Heart left ventricle (tissue), 16 donors: ENCODE measurements at regions of chr7 and their contacts with region 1.

Region 1: GRCh38 chr7:81549484-81550016 is 220.3 kb downstream of the HGF start:
- DNase-seq: no peak
- ATAC-seq: no peak
- H3K4me3 ChIP-seq: no peak overlapping the region
- H3K27ac ChIP-seq: no peak overlapping the region
- H3K4me1 ChIP-seq: no peaks in the 10 kb centered on the region
- H3K27me3 ChIP-seq: no peaks in the 10 kb centered on the region
- CTCF ChIP-seq: no peak
- POLR2A ChIP-seq: no peak

Region 2: GRCh38 chr7:83550100-83550499 is 2000.5 kb after region 1 on chr7:
- intact Hi-C with region 1: loop called in 1 of 10 experiments (anchors 10 kb)
- DNase-seq: no peak
- ATAC-seq: no peak
- H3K4me3 ChIP-seq: no peak overlapping the region
- H3K27ac ChIP-seq: no peak overlapping the region
- H3K4me1 ChIP-seq: no peaks in the 10 kb centered on the region
- H3K27me3 ChIP-seq: no peaks in the 10 kb centered on the region
- CTCF ChIP-seq: no peak
- POLR2A ChIP-seq: no peak